ENCODE measurements at regions of chr6 and their contacts with region 1.

Region 1: GRCh38 chr6:105317607-105318533 is 85.0 kb downstream of the PREP start:
- DNase-seq: peak in 1 of 3 donors; percentile 58
- ATAC-seq: peak; percentile 47
- H3K4me3 ChIP-seq: no peak overlapping the region
- H3K4me1 ChIP-seq: no peaks in the 10 kb centered on the region
- CTCF ChIP-seq: no peak

Region 2: GRCh38 chr6:105112577-105112976 is 205.3 kb before region 1 on chr6:
- intact Hi-C with region 1: loop called in 1 of 2 experiments (anchors 10 kb)
- DNase-seq: no peak
- ATAC-seq: no peak
- H3K4me3 ChIP-seq: no peak overlapping the region
- H3K4me1 ChIP-seq: peaks cover 7% of the 10 kb centered on the region
- CTCF ChIP-seq: no peak

Region 3: GRCh38 chr6:105484238-105485161 is 166.6 kb after region 1 on chr6:
- intact Hi-C with region 1: no loop called
- DNase-seq: peak in 1 of 3 donors; percentile 9
- ATAC-seq: peak; percentile 74
- H3K4me3 ChIP-seq: no peak overlapping the region
- H3K4me1 ChIP-seq: no peaks in the 10 kb centered on the region
- CTCF ChIP-seq: peak; percentile 56